Psoas muscle (tissue), 8 donors: ENCODE measurements at regions of chr15 and their contacts with region 1.

Region 1: DNA sequence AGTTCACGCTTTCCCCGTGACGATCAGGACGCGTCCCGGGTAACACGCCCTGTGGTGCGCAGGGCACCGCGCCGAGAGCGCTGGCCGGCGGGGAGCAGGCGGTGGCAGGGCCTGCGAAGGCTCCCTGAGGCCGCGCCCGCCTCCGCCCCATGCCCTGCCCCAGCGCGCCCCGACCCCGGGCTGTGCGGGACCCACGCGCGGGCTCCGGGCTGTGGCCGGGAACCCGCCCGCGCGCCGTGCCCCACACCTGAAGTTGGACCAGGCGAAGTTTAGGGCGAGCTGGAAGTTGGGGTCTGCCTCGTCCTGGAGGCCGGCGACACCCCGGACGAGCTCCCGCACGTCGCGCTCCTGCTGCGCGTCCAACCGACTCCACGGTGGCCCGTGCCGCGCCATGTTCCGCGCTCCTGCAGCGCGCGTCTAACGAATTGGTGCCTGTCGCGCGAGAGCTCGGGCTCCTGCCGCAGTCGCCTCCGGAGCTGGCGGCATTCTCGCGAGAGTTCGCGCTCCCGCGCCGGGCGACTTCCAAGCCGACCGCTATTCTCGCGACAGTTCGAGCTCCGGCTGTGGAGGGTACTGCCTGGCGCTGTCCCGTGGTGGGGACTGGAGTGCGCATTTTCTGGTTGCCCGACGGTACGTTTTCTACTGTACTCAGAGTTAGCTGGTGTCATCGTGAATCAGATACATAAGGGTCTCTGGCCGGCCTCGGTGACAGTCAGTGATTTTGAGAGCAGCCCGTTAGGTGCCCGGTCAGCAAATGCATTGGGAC is at the start of gene TUBGCP5:
- DNase-seq: peak; percentile 98 to 99
- ATAC-seq: peak; percentile 97 to 99 (median 98)
- H3K4me3 ChIP-seq: peak within 1 kb of the TSS; percentile 80
- H3K27ac ChIP-seq: peak within 1 kb of the TSS; percentile 83
- H3K4me1 ChIP-seq: peaks cover 7% of the 10 kb centered on the region
- H3K27me3 ChIP-seq: no peaks in the 10 kb centered on the region
- CTCF ChIP-seq: peak; percentile 43
- total RNA-seq, gene TUBGCP5: 9.2 to 15.1 (median 12.1) TPM

Region 2: DNA sequence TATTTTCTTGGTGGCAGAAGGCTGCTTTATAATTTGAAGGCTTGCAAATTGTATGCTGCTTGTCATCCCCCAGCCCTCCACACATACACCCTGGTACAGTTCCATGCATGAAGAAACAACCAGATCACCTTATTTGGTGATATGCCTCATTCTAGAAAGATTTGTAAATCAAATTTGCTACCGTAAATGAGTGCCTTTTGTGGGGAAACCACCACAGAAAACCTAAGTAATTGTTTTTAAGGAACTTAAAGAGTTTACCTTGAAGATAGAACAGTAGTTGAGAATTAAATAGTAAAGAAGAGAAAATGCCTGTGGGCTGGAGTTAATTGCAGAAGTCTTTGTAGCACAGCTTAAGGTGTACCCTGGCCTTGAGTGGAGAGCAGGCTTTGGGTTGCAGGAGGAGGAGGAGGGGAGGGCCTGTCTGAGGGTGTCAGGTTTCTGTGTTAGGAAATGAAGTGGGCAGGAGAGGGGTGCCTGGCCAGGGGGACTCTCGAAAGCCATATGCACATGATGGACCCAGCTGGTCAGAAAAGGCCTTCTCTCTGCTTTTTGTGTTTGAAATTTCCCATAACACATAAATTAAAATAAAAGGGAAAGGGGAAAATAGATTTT is 193.9 kb before region 1 on chr15:
- intact Hi-C with region 1: loop called in 1 of 2 experiments (anchors 5 kb)
- DNase-seq: no peak
- ATAC-seq: peak; percentile 75 to 91 (median 82)
- H3K4me3 ChIP-seq: peak overlapping the region; percentile 23
- H3K27ac ChIP-seq: peak overlapping the region; percentile 64
- H3K4me1 ChIP-seq: peaks cover 23% of the 10 kb centered on the region
- H3K27me3 ChIP-seq: no peaks in the 10 kb centered on the region
- CTCF ChIP-seq: no peak

Region 3: GRCh38 chr15:22980189-22981050 is 58.9 kb before region 1 on chr15 and contains the start of gene CYFIP1:
- intact Hi-C with region 1: loop called in 1 of 2 experiments (anchors 10 kb)
- DNase-seq: peak; percentile 88 to 91
- ATAC-seq: peak; percentile 86 to 93 (median 92)
- H3K4me3 ChIP-seq: peak within 1 kb of the TSS; percentile 89
- H3K27ac ChIP-seq: peak within 1 kb of the TSS; percentile 64
- H3K4me1 ChIP-seq: peaks cover 6% of the 10 kb centered on the region
- H3K27me3 ChIP-seq: no peaks in the 10 kb centered on the region
- CTCF ChIP-seq: no peak
- total RNA-seq, gene CYFIP1: 23.3 to 43.0 (median 28.8) TPM

Region 4: GRCh38 chr15:23014394-23015000 is 24.8 kb before region 1 on chr15:
- intact Hi-C with region 1: no loop called
- DNase-seq: no peak
- ATAC-seq: no peak
- H3K4me3 ChIP-seq: no peak overlapping the region
- H3K27ac ChIP-seq: no peak overlapping the region
- H3K4me1 ChIP-seq: no peaks in the 10 kb centered on the region
- H3K27me3 ChIP-seq: no peaks in the 10 kb centered on the region
- CTCF ChIP-seq: no peak